GM13976 (cell line): ENCODE measurements at regions of chr1 and their contacts with region 1.

Region 1: DNA sequence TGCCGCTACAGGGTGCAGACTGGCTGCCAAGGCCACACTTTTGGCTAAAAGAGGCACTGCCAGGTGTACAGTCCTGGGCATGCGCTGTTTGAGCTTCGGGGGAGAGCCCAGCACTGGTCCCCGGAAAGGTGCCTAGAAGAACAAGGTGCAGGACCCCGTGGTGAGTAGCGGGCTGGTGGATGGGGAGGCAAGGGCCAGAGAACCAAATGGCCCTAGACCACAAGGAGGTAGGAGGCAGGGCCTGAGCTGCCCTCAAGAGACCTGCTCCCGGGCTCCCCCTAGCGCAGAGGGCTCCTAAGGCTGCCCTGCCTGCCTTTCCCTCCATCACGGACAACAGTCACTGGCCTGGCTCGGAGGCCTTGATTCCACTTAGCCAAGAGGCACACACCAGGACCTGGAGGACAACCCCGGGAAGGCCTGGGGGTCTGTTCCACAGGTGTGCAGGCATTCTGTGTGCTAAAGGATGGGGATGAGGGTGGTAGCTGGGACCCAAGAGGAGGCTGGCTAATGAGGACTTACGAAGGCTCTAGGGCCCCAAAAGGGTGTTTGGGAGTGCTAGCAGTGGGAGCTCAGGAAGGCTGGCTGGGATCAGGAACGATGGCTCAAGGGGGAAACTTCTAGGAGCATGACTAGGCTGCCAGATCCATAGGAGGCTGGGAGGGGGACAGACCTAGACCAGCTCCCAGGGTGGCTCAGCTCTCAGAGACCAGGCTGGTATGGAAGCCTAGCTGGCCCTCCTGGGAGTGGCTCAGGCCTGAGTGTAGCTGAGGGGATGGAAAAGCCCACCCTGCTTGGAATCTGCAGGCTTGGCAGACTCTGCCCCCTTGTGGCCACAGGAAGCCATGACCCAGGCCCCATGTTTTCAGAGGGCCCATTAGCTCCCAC is 742 bp downstream of the ARTN start:
- DNase-seq: peak; percentile 90
- CTCF ChIP-seq: peak; percentile 80

Region 2: GRCh38 chr1:43763497-43763973 is 170.8 kb before region 1 on chr1:
- in situ Hi-C with region 1: loop called (anchors 10 kb)
- DNase-seq: peak; percentile 68
- CTCF ChIP-seq: peak; percentile 74